ENCODE measurements at regions of chr7 and their contacts with region 1.

Region 1: GRCh38 chr7:98294796-98295382 is 13.4 kb downstream of the BRI3 start:
- DNase-seq: peak in 8 of 10 donors; percentile 43 to 93 (median 58)

Region 2: DNA sequence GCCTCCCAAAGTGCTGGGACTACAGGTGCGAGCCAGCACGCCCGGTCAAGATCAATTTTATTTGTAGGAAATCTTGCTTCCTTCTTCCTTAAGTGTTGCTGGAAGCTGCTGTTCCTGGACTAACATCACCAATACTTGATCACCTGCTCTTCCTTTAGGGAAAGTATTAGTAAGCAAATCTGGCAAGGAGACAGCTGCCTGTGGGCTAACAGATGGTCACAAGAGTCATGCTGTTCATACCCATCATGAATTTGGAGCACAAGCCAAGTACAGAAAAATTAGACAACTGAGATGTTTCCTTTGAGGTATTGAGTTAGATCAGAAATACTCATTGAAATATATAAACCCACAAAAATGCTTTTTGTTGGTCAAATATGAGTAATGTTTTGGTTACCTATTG is 78.1 kb after region 1 on chr7:
- intact Hi-C with region 1: no loop called
- DNase-seq: no peak

Region 3: DNA sequence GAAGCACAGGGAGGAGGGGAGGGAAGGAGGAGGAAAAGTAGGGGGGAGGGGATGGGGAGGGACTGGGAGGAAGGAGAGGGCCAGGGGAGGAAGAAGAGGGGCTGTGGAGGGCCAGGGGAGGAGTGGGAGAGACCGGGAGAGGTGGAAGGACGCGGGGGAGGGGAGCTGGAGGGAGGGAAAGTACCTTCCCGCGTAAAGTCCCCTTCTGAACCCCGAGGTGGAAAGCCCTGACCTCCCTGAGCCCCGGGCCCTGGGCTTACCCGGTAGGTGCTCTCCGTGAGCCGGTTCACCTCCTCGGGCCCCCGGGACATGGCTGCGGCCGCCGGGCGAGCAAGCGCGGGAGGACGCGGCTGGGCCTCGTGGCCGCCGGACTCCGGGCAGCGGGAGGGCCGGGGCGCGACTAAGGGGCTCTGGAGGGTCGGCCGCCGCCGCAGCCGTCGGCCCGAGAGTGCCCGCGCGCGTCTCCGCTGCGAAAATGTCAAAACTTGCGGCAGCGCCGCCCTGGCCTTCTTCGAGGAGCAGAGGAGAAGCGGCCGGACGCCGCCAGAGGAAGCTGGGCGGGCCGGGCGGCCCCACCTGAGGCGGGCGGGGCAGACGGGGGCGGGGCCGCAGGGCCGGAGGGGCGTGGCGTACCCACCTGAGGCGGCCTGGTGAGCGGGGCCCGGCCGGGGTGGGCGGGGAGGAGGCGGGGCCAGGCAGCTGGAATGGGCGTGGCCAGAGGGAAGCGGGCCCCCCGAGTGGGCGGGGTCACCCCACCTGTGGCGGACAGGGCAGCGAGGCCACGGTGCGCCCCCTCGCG is 105.9 kb after region 1 on chr7 and contains the start of gene BAIAP2L1:
- intact Hi-C with region 1: loop called (anchors 5 kb)
- DNase-seq: peak in 6 of 10 donors; percentile 5 to 86 (median 28)